AG04449 (cell line): ENCODE measurements at regions of chr15 and their contacts with region 1.

Region 1: GRCh38 chr15:62569460-62570412 is 404.7 kb upstream of the C2CD4B start:
- DNase-seq: peak; percentile 84
- H3K4me3 ChIP-seq: no peak overlapping the region
- CTCF ChIP-seq: no peak

Region 2: DNA sequence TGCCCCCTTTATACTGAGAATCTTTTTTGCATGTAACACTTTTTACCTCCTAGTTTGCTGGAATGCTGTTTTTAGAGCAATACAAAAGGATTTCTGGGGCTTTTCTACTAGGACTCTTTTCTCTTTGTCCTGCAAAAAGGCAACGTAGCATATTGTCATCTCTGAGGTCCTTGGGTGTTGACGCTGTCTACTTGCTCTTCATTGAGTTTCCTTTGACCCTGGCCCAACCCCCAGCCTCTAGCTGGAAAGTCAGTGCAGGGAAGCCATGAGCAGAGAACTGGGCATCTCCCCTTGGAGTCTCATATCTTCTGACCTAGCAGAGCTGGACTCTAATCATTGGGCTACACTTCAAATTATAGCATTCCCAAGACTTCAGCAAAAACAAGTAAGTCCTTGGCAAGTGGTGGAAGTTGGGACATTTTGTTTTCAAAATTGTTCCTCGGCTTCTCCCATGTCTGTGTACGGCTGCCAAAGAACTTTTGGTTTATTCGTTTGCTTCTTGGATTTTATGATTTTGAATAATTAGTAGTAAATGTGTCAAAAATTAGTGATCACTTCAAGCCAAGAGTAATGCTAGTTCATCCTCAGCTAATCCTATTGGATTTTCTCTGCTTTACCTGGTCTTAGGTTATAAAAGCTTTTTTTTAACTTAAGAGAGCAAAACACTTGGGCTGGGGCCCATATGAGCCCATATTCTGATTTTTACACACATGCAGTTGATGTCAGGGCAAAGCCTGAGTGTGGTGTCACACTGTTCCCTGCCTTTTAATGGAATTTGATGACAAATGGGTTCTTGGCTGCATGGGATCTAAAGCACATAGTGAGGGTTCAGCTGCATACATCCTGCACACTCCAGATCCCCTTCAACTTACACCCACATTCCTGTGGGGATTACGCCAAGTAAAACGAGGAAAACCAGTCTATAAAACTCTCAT is 14.8 kb after region 1 on chr15:
- CTCF ChIA-PET with region 1: interaction called, 16 read pairs
- POLR2A ChIA-PET with region 1: no interaction called
- DNase-seq: no peak
- H3K4me3 ChIP-seq: no peak overlapping the region
- CTCF ChIP-seq: no peak

Region 3: DNA sequence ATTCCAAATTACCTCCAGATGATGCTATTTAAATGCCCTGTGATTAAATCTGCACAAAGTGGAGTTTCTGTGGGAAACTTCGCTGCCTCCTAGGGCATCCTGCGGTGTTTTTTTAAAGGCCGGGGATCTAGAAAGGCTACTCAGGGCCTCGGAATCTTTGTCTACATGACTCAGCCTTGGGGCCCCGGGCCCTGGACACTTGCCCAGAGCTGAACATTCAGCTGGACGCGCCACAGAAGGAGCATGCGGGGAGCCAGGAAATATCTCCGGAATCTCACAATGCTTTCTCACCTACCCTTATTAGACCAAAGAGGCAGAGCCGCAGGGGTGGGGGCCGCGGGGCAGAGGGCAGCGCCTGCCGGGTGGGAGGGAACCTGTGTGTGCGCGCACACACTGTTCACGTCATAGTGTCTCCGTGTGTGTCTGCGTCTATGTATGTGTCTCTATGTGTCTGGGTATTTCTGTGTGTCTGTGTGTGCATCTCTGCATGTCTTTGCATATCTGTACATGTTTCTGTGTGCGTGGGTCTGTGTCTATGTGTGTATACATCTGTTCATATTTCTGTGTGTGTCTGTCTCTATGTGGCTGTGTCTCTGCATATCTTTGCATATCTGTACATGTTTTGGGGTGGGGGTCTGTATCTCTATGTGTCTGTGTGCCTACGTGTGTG is 327.4 kb after region 1 on chr15:
- CTCF ChIA-PET with region 1: no interaction called
- POLR2A ChIA-PET with region 1: no interaction called
- DNase-seq: peak; percentile 97
- H3K4me3 ChIP-seq: no peak overlapping the region
- CTCF ChIP-seq: no peak